ENCODE measurements at regions of chr7 and their contacts with region 1.

Region 1: DNA sequence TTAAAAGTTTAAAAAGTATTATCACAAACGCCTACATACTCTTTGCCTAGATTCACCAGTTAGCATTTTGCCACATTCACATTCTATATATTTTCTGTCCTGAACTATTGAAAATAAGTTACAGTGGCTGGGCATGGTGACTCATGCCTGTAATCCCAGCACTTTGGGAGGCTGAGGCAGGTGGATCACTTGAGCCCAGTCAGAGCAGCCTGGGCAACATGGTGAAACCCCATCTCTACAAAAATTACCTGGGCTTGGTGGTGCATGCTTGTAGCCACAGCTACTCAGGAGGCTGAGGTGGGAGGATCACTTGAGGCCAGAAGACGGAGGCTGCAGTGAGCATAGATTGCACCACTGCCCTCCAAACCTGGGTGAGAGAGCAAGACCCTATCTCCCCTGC is 5.3 kb downstream of the ARPC1A start:
- H3K4me3 ChIP-seq: no peak overlapping the region
- H3K27ac ChIP-seq: peak overlapping the region; percentile 34; the same call in 1 of the 2 replicates
- H3K4me1 ChIP-seq: peaks cover 4% of the 10 kb centered on the region; the same call in 1 of the 2 replicates
- CTCF ChIP-seq: no peak

Region 2: DNA sequence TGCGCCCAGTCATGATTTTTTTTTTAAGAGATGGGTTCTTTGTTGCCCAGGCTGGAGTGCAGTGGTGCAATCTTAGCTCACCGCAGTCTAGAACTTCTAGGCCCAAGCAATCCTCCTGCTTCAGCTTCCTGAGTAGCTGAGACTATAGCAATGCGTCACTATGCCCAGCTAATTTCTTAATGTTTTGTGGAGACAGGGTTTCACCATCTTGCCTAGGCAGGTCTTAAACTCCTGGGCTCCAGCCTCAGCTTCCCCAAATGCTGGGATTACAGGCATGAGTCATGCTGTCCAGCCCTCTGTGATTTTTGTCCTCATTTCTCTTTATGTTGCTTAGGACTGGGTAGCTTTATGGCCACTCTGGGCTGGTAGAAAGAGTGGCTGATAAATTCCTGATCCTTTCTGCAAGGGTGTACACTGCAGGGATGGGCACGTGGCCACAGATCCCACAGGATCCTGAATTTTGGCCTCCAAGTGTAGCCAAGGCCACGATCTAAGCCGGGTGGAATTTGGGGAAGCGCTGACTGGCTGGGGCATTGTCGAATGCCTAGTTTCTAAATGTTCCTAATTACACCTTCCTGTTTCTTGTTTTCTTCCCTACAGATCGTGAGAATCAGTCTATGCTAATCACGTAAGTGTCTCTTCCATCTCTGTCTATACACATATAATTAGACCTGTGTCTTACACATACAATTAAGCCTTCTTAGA is 82.5 kb before region 1 on chr7:
- CTCF ChIA-PET with region 1: no interaction called
- POLR2A ChIA-PET with region 1: interaction called, 11 read pairs
- H3K4me3 ChIP-seq: no peak overlapping the region
- H3K27ac ChIP-seq: no peak overlapping the region
- H3K4me1 ChIP-seq: no peaks in the 10 kb centered on the region
- CTCF ChIP-seq: no peak